Activated T-helper 2 cell treated with anti-CD3 and anti-CD28 coated beads, Interferon-gamma antibody, Interleukin-2, Interleukin-4, amounts not matched to agents 10 μg/mL and 5 μg/mL and 100 μg/mL, durations not matched to agents 14 hours and 24 hours and 36 hours (primary cell): ENCODE measurements at regions of chr6 and their contacts with region 1.

Region 1: DNA sequence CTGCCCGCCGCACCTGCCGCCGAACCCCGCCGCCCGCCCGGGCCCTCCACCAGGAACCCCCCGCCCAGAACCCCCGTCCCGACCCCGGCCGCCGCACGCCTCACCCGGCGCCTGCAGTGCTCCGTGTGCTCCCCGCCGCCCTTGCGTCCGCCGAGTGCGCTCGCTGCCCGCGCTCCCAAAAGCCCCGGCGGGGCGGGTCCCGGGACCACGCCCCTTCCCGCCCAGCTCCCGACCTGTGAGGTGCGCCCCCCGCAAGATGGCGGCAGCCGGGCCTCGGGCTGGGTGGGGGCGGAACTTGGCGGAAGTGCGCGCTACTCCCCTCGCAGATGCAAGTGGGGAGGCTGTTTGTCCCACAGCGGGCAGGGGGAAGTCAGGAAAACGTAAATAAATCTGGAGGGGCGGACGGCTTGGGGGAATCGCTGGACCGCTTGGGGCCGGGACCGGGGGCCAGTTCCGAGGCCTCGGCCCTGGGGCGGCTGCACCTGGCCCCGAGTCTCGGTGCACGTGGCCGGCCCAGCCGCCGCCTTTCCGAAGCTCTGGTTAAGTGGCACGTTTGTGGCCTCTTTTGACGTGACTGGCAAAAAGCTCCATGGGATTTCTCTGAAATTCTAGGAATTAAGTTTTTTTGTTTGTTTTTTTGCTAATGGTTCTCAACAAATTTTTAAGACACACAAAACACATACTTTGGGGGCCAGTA is at the start of gene EZR:
- DNase-seq: peak; percentile 71
- H3K4me3 Mint-ChIP-seq: peak within 1 kb of the TSS; percentile 99
- H3K27ac Mint-ChIP-seq: peak within 1 kb of the TSS; percentile 89
- H3K4me1 Mint-ChIP-seq: peaks cover 42% of the 10 kb centered on the region
- H3K27me3 Mint-ChIP-seq: no peaks in the 10 kb centered on the region
- total RNA-seq, gene EZR: 204 and 206 TPM in 2 replicates

Region 2: DNA sequence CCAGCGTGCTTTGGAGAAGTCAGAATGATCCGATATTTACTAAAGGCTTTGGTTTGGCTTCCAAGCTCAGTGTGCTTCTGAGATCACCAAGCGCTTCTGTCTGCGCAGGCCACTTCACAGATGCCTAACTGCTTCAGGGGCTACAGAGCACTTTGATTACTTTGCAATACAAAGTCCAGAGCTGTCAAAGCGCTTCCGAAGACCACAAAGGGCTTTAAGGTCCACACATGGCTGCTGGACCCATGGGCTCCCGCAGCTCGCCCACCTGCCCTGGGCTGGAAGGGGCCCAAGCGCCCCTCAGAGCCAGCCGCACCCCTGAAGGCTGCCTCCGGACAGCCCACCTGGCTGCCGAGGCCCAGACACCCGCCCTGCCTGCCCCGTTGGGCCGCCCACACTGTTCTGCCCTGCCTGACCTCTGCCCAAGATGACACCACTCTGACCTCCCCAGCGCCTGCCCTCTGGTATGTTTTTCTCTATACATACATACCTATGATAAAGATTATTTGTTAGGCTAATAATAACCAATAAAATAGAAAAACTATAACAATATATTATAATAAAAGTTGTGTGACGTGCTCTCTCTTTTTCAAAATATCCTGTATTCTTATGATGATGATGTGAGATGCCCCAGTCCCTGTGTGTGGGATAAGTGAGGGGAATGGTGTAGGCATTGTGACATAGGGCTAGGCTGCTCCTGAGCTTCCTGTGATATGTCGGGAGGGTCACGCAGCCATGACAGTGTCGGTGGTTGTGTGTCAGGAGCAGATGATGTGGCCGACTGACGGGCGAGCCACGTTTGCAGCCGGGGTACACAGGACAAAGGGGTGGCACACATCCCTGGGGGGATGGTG is 197.4 kb before region 1 on chr6:
- intact Hi-C with region 1: no loop called
- DNase-seq: no peak
- H3K4me3 Mint-ChIP-seq: no peak overlapping the region
- H3K27ac Mint-ChIP-seq: no peak overlapping the region
- H3K4me1 Mint-ChIP-seq: peaks cover 21% of the 10 kb centered on the region
- H3K27me3 Mint-ChIP-seq: no peaks in the 10 kb centered on the region

Region 3: GRCh38 chr6:158644231-158645063 is 174.9 kb before region 1 on chr6 and contains the start of gene DYNLT1:
- intact Hi-C with region 1: loop called (anchors 5 kb)
- DNase-seq: peak; percentile 88
- H3K4me3 Mint-ChIP-seq: peak within 1 kb of the TSS; percentile 97
- H3K27ac Mint-ChIP-seq: peak within 1 kb of the TSS; percentile 97
- H3K4me1 Mint-ChIP-seq: peaks cover 69% of the 10 kb centered on the region
- H3K27me3 Mint-ChIP-seq: no peaks in the 10 kb centered on the region
- total RNA-seq, gene DYNLT1: 94.4 and 108 TPM in 2 replicates

Region 4: GRCh38 chr6:158758451-158758861 is 60.9 kb before region 1 on chr6:
- intact Hi-C with region 1: no loop called
- DNase-seq: no peak
- H3K4me3 Mint-ChIP-seq: no peak overlapping the region
- H3K27ac Mint-ChIP-seq: no peak overlapping the region
- H3K4me1 Mint-ChIP-seq: no peaks in the 10 kb centered on the region
- H3K27me3 Mint-ChIP-seq: no peaks in the 10 kb centered on the region

Region 5: DNA sequence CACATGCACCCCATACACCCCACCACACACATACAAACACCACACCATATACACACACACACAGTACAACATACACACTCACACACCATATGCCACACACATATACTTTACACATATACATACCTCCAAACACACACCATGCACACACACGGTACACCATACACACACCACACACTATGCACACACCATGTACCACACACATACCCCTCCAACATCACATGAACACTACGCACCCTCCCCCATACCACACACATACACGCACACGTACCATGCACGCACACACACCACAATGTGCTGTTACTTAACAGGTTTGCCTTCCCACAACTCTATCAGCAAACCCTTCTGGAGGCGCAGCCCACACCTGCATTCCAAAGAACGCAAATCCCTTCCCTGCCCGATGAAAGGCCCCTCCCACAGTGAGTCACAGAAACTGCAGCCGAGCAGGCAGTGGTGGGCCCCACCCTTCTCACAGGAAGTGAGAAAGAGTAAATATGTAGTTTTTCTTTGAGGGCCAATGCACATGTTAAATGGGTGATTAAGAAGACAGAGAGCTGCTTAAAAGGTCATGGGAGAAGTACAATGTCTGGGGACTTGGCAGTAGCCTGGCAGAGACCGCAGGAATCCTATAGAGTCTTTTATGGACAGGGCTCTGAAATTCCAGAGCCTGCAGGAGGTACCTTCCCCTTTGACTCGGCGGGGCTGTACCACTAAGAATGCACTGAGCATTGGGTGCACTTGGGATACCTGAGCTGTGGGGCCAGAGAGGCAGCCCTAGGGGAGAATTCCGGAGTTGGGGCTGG is 33.9 kb after region 1 on chr6:
- intact Hi-C with region 1: loop called (anchors 1 kb)
- DNase-seq: peak; percentile 86
- H3K4me3 Mint-ChIP-seq: no peak overlapping the region
- H3K27ac Mint-ChIP-seq: no peak overlapping the region
- H3K4me1 Mint-ChIP-seq: peaks cover 29% of the 10 kb centered on the region
- H3K27me3 Mint-ChIP-seq: no peaks in the 10 kb centered on the region

Region 6: GRCh38 chr6:158958504-158959386 is 139.4 kb after region 1 on chr6:
- intact Hi-C with region 1: no loop called
- DNase-seq: no peak
- H3K4me3 Mint-ChIP-seq: no peak overlapping the region
- H3K27ac Mint-ChIP-seq: no peak overlapping the region
- H3K4me1 Mint-ChIP-seq: peaks cover 8% of the 10 kb centered on the region
- H3K27me3 Mint-ChIP-seq: peaks cover 5% of the 10 kb centered on the region

Region 7: GRCh38 chr6:158993639-158994038 is 174.3 kb after region 1 on chr6:
- intact Hi-C with region 1: loop called (anchors 2 kb)
- DNase-seq: no peak
- H3K4me3 Mint-ChIP-seq: no peak overlapping the region
- H3K27ac Mint-ChIP-seq: no peak overlapping the region
- H3K4me1 Mint-ChIP-seq: peaks cover 27% of the 10 kb centered on the region
- H3K27me3 Mint-ChIP-seq: no peaks in the 10 kb centered on the region

Region 8: GRCh38 chr6:160010067-160010466 is 1190.7 kb after region 1 on chr6:
- intact Hi-C with region 1: loop called (anchors 10 kb)
- DNase-seq: no peak
- H3K4me3 Mint-ChIP-seq: no peak overlapping the region
- H3K27ac Mint-ChIP-seq: no peak overlapping the region
- H3K4me1 Mint-ChIP-seq: peaks cover 34% of the 10 kb centered on the region
- H3K27me3 Mint-ChIP-seq: no peaks in the 10 kb centered on the region